ENCODE measurements at regions of chr17 and their contacts with region 1.

Region 1: DNA sequence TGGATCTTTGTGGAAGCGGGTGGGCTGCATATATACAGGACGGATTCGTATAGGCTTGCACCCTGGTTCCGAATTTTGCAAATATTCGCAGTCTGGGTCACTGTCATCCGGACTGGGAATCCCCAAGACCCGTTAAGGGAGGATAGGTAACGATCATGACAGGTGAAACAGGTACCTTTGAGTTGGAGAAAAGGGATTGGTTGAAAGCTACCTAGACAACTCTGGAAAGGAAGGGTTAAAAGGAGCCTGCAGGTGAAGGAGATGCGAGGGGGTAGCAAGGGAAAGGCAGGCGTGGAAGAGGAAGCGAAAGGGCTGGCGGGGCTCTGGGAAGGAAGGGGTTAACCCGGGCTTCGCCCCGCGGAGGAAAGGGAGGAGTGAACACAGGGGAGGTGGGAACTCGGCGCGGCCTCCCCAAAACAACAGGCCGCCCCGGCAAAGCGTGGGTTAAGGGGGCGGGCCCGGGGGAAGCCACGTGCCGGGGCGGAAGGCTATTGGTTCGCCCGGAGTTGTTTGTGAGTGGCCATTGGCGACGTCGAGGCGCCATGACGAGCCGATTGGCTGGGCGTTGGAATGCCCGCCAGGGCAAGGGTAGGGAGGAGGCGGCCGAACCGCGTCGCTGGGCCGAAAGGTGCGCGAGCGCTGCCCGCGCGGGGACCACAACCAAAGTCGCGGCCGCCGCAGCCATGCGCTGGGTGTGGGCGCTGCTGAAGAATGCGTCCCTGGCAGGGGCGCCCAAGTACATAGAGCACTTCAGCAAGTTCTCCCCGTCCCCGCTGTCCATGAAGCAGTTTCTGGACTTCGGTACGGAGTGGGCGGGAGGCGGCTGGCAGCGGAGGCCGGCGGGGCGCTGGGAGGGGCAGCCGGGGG is at the start of gene PDK2:
- DNase-seq: peak; percentile 97
- H3K4me3 Mint-ChIP-seq: peak within 1 kb of the TSS; percentile 82
- H3K27ac Mint-ChIP-seq: peak within 1 kb of the TSS; percentile 83
- H3K4me1 Mint-ChIP-seq: peaks cover 17% of the 10 kb centered on the region
- H3K27me3 Mint-ChIP-seq: no peaks in the 10 kb centered on the region
- total RNA-seq, gene PDK2: 13.3 to 14.6 TPM

Region 2: GRCh38 chr17:50055426-50056230 is 39.4 kb before region 1 on chr17 and contains the start of gene ITGA3:
- CTCF ChIA-PET with region 1: interaction called, 51 read pairs
- POLR2A ChIA-PET with region 1: interaction called, 5 read pairs
- intact Hi-C with region 1: no loop called
- DNase-seq: peak; percentile 78
- H3K4me3 Mint-ChIP-seq: peak within 1 kb of the TSS; percentile 87
- H3K27ac Mint-ChIP-seq: peak within 1 kb of the TSS; percentile 84
- H3K4me1 Mint-ChIP-seq: peaks cover 31% of the 10 kb centered on the region
- H3K27me3 Mint-ChIP-seq: no peaks in the 10 kb centered on the region
- total RNA-seq, gene ITGA3: 15.8 to 17.6 TPM

Region 3: GRCh38 chr17:50107790-50108414 is 12.9 kb after region 1 on chr17:
- CTCF ChIA-PET with region 1: interaction called, 18 read pairs
- POLR2A ChIA-PET with region 1: no interaction called
- intact Hi-C with region 1: no loop called
- DNase-seq: no peak
- H3K4me3 Mint-ChIP-seq: no peak overlapping the region
- H3K27ac Mint-ChIP-seq: no peak overlapping the region
- H3K4me1 Mint-ChIP-seq: no peaks in the 10 kb centered on the region
- H3K27me3 Mint-ChIP-seq: no peaks in the 10 kb centered on the region

Region 4: GRCh38 chr17:50129728-50130558 is 35.0 kb after region 1 on chr17 and contains the start of gene SAMD14:
- CTCF ChIA-PET with region 1: interaction called, 17 read pairs
- POLR2A ChIA-PET with region 1: no interaction called
- intact Hi-C with region 1: no loop called
- DNase-seq: peak; percentile 63
- H3K4me3 Mint-ChIP-seq: peak within 1 kb of the TSS; percentile 68
- H3K27ac Mint-ChIP-seq: peak within 1 kb of the TSS; percentile 18
- H3K4me1 Mint-ChIP-seq: peaks cover 27% of the 10 kb centered on the region
- H3K27me3 Mint-ChIP-seq: peaks cover 10% of the 10 kb centered on the region
- total RNA-seq, gene SAMD14: 3.4 to 3.7 TPM

Region 5: GRCh38 chr17:50151041-50151936 is 56.3 kb after region 1 on chr17:
- CTCF ChIA-PET with region 1: interaction called, 17 read pairs
- POLR2A ChIA-PET with region 1: no interaction called
- intact Hi-C with region 1: loop called (anchors 1 kb)
- DNase-seq: peak; percentile 94
- H3K4me3 Mint-ChIP-seq: peak overlapping the region; percentile 87
- H3K27ac Mint-ChIP-seq: peak overlapping the region; percentile 97
- H3K4me1 Mint-ChIP-seq: peaks cover 38% of the 10 kb centered on the region
- H3K27me3 Mint-ChIP-seq: no peaks in the 10 kb centered on the region

Region 6: GRCh38 chr17:50269477-50270434 is 174.8 kb after region 1 on chr17:
- CTCF ChIA-PET with region 1: interaction called, 6 read pairs
- POLR2A ChIA-PET with region 1: no interaction called
- intact Hi-C with region 1: loop called (anchors 5 kb)
- DNase-seq: peak; percentile 79
- H3K4me3 Mint-ChIP-seq: no peak overlapping the region
- H3K27ac Mint-ChIP-seq: no peak overlapping the region
- H3K4me1 Mint-ChIP-seq: peaks cover 5% of the 10 kb centered on the region
- H3K27me3 Mint-ChIP-seq: peaks cover 15% of the 10 kb centered on the region